HepG2 (cell line): ENCODE measurements at regions of chr12 and their contacts with region 1.

Region 1: DNA sequence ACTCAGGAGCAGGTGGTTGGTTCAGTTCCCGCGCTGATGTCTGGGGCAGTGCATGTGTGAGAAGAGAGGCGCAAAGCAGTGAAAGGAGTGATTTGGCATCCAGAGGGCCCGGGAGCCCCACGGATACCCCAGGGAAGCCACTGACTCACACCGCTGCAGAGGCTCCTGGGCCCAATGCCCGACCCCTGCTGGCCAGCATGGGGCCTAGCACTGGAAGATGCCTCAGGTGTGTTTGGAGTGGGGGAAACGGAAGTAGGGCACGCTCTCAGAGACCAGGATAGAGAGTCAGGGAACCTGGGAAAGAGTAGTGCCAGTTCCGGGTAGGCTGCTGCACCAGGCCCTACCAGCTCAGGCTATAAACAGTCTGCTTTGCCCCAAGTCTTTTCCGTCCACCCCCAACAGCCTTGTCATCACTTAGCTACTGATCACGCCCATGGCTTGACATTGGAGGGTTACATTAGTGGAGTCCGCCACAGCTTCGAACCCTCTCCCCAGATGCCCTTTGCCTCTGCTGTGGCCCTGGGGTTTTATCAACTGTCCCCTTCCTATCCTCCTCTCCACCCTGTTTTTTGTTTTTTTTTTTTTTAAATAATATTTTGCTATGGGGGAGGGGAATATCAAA is 9.5 kb upstream of the CSAD start:
- DNase-seq: peak; percentile 49
- ATAC-seq: peak; percentile 88
- H3K4me3 ChIP-seq: no peak overlapping the region
- H3K27ac ChIP-seq: no peak overlapping the region
- H3K4me1 ChIP-seq: peaks cover 20% of the 10 kb centered on the region
- H3K27me3 ChIP-seq: no peaks in the 10 kb centered on the region
- CTCF ChIP-seq: peak; percentile 86
- EP300 ChIP-seq: no peak
- POLR2A ChIP-seq: peak in 1 of 2 experiments; percentile 6; a peak in 1 of 4 replicates
- RAD21 ChIP-seq: peak; percentile 86

Region 2: GRCh38 chr12:53174881-53175491 is 15.2 kb before region 1 on chr12:
- CTCF ChIA-PET with region 1: interaction called, 6 read pairs
- POLR2A ChIA-PET with region 1: interaction called, 6 read pairs
- in situ Hi-C with region 1: no loop called
- intact Hi-C with region 1: loop called (anchors 1 kb)
- DNase-seq: peak; percentile 94
- ATAC-seq: peak; percentile 94
- H3K4me3 ChIP-seq: no peak overlapping the region; a peak in 1 of 6 replicates
- H3K27ac ChIP-seq: peak overlapping the region; percentile 69
- H3K4me1 ChIP-seq: peaks cover 54% of the 10 kb centered on the region
- H3K27me3 ChIP-seq: no peaks in the 10 kb centered on the region; a peak in 1 of 5 replicates
- CTCF ChIP-seq: peak; percentile 56
- EP300 ChIP-seq: peak in 1 of 2 experiments; percentile 75; a peak in 1 of 4 replicates
- POLR2A ChIP-seq: no peak
- RAD21 ChIP-seq: 0 out of 2 replicates have a peak, but pooled peaks have one; percentile 26